ENCODE measurements at regions of chr1 and their contacts with region 1.

Region 1: DNA sequence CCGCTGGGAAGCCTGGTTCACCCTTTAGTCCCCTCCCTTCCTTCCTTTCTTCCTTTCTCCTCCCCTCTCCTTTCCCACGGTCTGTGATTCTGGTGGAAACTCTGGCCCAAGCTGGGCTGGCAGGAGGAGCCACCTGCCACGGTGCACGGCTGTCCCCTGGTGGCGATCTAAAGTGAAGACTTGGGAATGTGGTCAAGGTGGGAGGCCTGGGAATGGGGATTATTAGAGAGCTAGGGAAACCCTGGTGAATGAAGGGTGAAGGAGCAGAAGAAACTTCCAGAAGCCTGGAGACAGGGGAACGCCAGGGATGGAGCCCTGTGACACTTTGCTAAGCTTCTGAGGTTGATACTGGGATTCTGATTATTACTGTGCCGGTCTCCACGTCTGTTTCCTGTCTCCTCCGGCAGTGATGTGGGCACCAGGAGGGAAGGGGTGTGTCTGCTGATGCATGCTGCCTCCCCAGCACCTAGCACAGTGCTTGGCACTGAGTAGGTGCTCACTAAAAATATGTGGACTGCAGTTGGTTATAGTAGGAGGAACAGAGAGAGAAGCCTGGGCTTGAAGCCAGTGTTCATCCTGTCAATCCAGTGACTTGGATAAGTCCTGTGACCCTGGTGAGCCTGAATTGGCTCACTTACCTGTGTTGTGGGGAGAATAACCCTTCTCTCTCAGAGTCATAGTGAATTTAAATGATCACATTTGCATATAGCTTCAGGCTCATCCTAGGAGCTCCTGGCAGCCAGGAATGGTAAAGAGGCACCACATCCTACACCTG is 71.2 kb upstream of the NBPF3 start:
- H3K4me3 ChIP-seq: no peak overlapping the region
- H3K27ac ChIP-seq: no peak overlapping the region
- H3K4me1 ChIP-seq: no peaks in the 10 kb centered on the region
- CTCF ChIP-seq: peak; percentile 99

Region 2: DNA sequence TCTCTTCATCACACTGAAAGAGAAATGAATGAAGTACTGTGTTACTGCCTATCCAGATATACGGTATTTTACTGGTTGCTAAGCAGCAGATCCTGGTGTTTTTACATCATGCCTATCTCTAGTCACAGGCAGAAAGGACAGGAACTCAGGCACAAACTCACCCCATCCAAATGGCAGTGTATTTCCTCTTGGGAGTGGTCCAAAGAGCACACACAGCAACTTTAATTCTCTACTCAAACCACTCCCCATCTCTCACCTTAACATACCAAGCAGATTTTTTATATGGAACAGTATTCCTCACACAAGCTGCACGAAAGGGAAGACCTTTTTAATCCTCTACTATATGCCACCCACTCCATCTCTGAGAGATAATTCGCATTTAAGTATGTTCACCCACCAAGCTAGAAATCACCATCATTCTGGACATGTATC is 219.3 kb before region 1 on chr1:
- CTCF ChIA-PET with region 1: no interaction called
- POLR2A ChIA-PET with region 1: no interaction called
- H3K4me3 ChIP-seq: no peak overlapping the region
- H3K27ac ChIP-seq: no peak overlapping the region
- H3K4me1 ChIP-seq: peaks cover 4% of the 10 kb centered on the region; the same call in 1 of the 2 replicates
- CTCF ChIP-seq: no peak

Region 3: DNA sequence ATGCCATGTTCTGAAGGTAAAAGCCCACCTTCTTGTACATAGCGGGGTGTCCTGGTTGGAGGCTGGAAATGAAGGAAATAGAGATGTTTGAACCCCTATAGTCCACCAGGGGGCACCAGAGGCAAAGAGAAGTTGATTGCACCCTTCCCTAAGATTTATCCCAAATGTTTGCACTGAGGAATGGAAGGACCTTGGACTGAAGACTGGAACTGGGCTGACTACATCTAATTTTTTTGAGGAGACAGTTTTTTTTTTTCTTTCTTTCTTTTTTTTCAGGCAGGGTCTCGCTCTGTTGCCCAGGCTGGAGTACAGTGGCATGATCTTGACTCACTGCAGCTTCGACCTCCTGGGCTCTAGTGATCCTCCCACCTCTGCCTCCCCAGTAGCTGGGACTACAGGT is 136.7 kb before region 1 on chr1:
- CTCF ChIA-PET with region 1: interaction called, 173 read pairs
- POLR2A ChIA-PET with region 1: interaction called, 5 read pairs
- H3K4me3 ChIP-seq: no peak overlapping the region
- H3K27ac ChIP-seq: no peak overlapping the region
- H3K4me1 ChIP-seq: no peaks in the 10 kb centered on the region
- CTCF ChIP-seq: peak; percentile 59; the same call in 1 of the 2 replicates

Region 4: GRCh38 chr1:21255278-21255942 is 113.3 kb before region 1 on chr1:
- CTCF ChIA-PET with region 1: interaction called, 256 read pairs
- POLR2A ChIA-PET with region 1: no interaction called
- H3K4me3 ChIP-seq: no peak overlapping the region
- H3K27ac ChIP-seq: no peak overlapping the region
- H3K4me1 ChIP-seq: no peaks in the 10 kb centered on the region
- CTCF ChIP-seq: peak; percentile 80

Region 5: DNA sequence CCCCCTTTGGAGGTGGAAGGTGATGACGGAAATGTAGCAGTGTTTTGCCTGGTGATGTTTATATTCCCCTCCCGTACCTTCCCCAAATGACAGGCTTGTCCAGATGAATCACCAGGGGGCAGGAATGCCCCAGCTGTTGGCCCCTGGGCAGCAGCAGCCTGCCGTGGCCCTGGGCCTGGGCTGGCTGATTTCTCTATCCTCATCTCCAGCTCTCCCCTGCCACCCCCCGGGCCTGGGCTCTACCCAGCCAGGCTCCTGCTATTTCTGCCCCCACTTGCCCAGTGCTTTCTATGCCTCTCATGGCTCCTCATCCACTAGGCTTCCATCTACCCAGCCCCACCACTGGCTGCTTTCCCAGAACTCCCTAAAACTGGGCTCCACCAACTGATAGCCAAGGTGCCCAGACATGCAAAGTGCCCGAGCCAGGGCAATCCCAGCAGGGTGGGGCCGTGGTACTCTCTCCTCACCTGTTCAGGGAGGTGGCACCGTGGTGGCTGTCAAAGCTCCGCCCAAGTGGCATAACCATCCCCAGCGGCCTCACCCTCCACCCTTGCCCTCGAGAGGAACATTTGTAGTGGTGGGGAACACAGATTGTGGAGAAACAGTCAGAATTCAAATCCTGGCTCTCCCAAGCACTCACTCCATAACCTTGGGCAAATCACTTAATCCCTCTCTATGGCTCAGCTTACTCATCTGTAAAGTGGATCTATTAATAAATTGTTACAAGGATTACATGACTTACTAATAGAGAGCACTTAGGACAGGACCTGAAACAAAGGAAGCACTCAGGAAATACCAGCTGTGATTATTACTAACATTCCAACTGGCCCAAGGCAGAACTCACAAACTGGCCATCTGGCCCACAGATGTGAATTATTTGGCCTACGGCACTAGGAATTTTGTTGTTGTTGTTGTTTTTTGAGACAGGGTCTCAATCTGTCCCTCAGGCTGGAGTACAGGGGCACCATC is 65.7 kb before region 1 on chr1:
- CTCF ChIA-PET with region 1: interaction called, 30 read pairs
- POLR2A ChIA-PET with region 1: no interaction called
- H3K4me3 ChIP-seq: no peak overlapping the region
- H3K27ac ChIP-seq: no peak overlapping the region
- H3K4me1 ChIP-seq: peaks cover 8% of the 10 kb centered on the region
- CTCF ChIP-seq: peak; percentile 77

Region 6: GRCh38 chr1:21378705-21379494 is 10.2 kb after region 1 on chr1:
- CTCF ChIA-PET with region 1: interaction called, 11 read pairs
- POLR2A ChIA-PET with region 1: no interaction called
- H3K4me3 ChIP-seq: no peak overlapping the region
- H3K27ac ChIP-seq: no peak overlapping the region
- H3K4me1 ChIP-seq: no peaks in the 10 kb centered on the region
- CTCF ChIP-seq: no peak

Region 7: DNA sequence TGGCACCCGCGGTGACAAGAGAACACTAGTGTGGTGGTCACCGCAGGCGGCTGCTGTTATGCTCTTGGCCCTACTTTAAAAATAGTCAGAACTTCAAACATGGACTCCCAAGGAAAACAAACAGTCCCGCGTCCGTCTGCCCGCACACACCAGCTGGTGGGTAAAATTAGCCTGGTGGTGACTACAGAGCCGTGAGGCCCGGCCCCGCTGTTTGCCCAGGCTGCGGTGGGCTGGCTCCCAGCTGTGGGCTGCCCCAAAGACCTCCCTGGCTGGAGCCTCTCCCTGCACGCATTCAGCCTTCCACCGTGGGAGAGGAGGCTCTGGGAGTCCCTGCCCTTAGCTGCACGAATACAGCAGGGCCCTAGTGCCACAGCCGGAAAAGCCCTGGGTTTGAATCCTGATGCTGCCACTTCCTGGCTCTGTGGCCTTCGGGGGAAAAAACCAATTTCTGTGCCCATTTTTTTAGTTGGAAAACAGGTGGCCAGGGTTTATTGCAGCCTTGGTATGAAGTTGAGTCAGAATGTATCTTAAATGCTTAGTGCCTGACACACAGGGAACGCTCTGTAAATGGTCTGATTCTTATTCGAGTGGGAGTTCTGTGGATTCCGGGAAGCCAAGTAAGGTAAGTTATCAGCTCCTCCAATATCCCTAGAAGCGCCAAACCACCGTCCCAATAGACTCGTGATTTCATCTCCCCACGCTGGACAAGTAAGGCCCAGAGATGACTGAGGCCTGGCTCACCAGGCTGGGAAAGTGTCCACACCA is 198.7 kb after region 1 on chr1:
- CTCF ChIA-PET with region 1: interaction called, 31 read pairs
- POLR2A ChIA-PET with region 1: interaction called, 3 read pairs
- H3K4me3 ChIP-seq: no peak overlapping the region
- H3K27ac ChIP-seq: no peak overlapping the region
- H3K4me1 ChIP-seq: no peaks in the 10 kb centered on the region
- CTCF ChIP-seq: no peak

Measured in HEK293 (cell line).